ENCODE measurements at regions of chr1 and their contacts with region 1.

Region 1: DNA sequence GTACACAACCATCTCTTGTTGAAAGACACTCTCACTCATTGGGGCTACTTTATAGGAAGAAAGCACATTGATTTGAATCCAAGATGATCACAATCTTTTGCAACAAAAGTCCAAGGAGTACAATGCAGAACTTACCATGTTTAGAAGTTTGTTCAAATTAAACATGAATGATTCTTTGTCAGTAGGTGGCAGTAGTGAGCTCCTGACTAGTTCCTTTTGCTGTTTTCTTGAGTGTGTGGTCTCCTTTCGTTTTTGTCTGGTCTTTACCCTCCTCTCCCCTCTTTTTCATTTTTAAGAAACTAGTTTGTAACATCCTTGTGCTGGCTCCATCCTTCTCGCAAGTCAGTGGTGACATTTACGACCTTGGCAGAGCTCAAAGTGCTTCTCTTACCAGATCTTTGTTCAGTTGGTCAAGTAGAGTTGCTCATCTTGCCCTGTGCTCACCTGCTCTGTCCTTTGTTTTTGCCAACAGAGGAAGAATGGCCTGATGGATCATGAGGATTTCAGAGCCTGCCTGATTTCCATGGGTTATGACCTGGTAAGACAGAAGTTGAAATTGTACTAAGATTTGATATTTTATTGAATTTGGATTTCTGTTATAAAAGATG is 35.7 kb upstream of the MTR start:
- DNase-seq: no peak
- H3K4me3 ChIP-seq: no peak overlapping the region
- H3K27ac ChIP-seq: no peak overlapping the region
- H3K4me1 ChIP-seq: no peaks in the 10 kb centered on the region
- H3K27me3 ChIP-seq: peaks cover 0 to 1% (median 0%) of the 10 kb centered on the region in 4 experiments; a peak in 1 of 7 replicates
- CTCF ChIP-seq: peak in 2 of 3 experiments; percentile 40 to 70; a peak in 2 of 4 replicates
- EP300 ChIP-seq: no peak
- POLR2A ChIP-seq: no peak
- RAD21 ChIP-seq: peak; percentile 51 to 54

Region 2: DNA sequence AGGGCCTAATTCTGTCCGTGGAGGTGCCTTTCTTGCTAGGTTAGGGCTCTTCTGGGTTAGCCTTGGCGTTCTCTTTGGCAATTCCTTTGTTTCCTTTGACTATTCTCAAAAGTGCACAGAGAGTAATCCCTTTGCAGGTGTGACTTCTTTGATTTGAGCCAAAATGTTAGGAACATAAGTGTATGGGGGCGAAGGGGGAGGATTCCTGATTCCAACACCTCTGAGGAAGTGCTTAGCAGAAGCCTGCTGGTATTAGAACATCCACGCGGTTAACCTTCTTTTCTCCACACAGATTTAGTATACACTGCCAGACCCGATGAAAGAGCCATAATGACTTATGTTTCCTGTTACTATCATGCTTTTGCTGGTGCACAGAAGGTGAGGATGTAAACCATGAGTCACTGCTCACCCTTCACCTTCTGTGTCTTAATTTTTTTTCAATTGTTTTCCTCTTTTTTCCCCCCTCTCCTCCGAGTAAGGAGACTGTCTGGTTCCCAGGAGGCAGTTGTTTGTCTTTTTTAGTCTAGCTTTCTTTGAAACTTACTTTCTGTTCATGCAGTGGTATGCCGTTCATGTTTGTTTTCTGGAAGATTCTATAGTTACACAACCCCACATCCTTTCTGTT is 25.1 kb before region 1 on chr1:
- CTCF ChIA-PET with region 1: interaction called, 11 read pairs
- POLR2A ChIA-PET with region 1: no interaction called
- DNase-seq: no peak
- H3K4me3 ChIP-seq: no peak overlapping the region
- H3K27ac ChIP-seq: no peak overlapping the region
- H3K4me1 ChIP-seq: no peaks in the 10 kb centered on the region; a peak in 1 of 7 replicates
- H3K27me3 ChIP-seq: no peaks in the 10 kb centered on the region
- CTCF ChIP-seq: no peak
- EP300 ChIP-seq: no peak
- POLR2A ChIP-seq: no peak
- RAD21 ChIP-seq: no peak

Region 3: GRCh38 chr1:236748471-236748870 is 10.9 kb before region 1 on chr1:
- CTCF ChIA-PET with region 1: interaction called, 34 read pairs
- POLR2A ChIA-PET with region 1: no interaction called
- DNase-seq: no peak
- H3K4me3 ChIP-seq: no peak overlapping the region
- H3K27ac ChIP-seq: no peak overlapping the region
- H3K4me1 ChIP-seq: no peaks in the 10 kb centered on the region
- H3K27me3 ChIP-seq: no peaks in the 10 kb centered on the region
- CTCF ChIP-seq: peak in 1 of 3 experiments; percentile 49; a peak in 1 of 4 replicates
- EP300 ChIP-seq: no peak
- POLR2A ChIP-seq: no peak
- RAD21 ChIP-seq: no peak

Region 4: GRCh38 chr1:236786453-236786852 is 27.1 kb after region 1 on chr1:
- CTCF ChIA-PET with region 1: interaction called, 14 read pairs
- POLR2A ChIA-PET with region 1: no interaction called
- DNase-seq: no peak
- H3K4me3 ChIP-seq: no peak overlapping the region
- H3K27ac ChIP-seq: no peak overlapping the region
- H3K4me1 ChIP-seq: no peaks in the 10 kb centered on the region
- H3K27me3 ChIP-seq: no peaks in the 10 kb centered on the region
- CTCF ChIP-seq: no peak
- EP300 ChIP-seq: no peak
- POLR2A ChIP-seq: no peak
- RAD21 ChIP-seq: no peak